Calu3 (cell line): ENCODE measurements at regions of chr6 and their contacts with region 1.

Region 1: GRCh38 chr6:127855542-127856159 is 45.2 kb downstream of the THEMIS start:
- DNase-seq: peak; percentile 22
- H3K4me3 Mint-ChIP-seq: no peak overlapping the region
- H3K27ac Mint-ChIP-seq: no peak overlapping the region
- H3K4me1 Mint-ChIP-seq: no peaks in the 10 kb centered on the region
- H3K27me3 Mint-ChIP-seq: no peaks in the 10 kb centered on the region
- CTCF ChIP-seq: peak; percentile 42

Region 2: GRCh38 chr6:127796713-127797112 is 58.9 kb before region 1 on chr6:
- CTCF ChIA-PET with region 1: no interaction called
- intact Hi-C with region 1: no loop called
- DNase-seq: no peak
- H3K4me3 Mint-ChIP-seq: no peak overlapping the region
- H3K27ac Mint-ChIP-seq: no peak overlapping the region
- H3K4me1 Mint-ChIP-seq: no peaks in the 10 kb centered on the region
- H3K27me3 Mint-ChIP-seq: peaks cover 50% of the 10 kb centered on the region
- CTCF ChIP-seq: no peak

Region 3: GRCh38 chr6:127963495-127963894 is 107.8 kb after region 1 on chr6:
- CTCF ChIA-PET with region 1: no interaction called
- intact Hi-C with region 1: loop called (anchors 5 kb)
- DNase-seq: no peak
- H3K4me3 Mint-ChIP-seq: no peak overlapping the region
- H3K27ac Mint-ChIP-seq: no peak overlapping the region
- H3K4me1 Mint-ChIP-seq: no peaks in the 10 kb centered on the region
- H3K27me3 Mint-ChIP-seq: no peaks in the 10 kb centered on the region
- CTCF ChIP-seq: no peak

Region 4: DNA sequence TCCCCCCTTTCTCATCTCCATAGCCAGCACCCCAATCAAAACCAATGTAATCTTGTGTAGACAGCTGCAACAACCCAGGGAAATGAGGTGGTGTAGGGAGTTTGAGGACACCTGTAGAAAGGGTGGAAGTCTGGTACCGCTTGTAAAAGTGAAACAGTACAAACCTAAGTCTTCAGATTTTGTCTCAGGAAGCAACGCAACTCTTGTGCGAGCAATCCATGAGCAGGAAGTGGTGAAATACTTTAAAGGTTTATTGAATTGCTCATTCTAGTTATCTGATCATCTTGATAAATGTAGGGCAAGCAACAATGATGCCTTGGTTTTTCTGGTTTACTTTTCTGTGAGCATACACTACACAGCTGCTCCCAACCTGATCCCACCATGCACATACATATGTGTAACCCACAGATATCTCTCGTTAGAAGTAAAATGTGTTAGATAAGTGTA is 116.3 kb after region 1 on chr6:
- CTCF ChIA-PET with region 1: interaction called, 11 read pairs
- intact Hi-C with region 1: no loop called
- DNase-seq: peak; percentile 47
- H3K4me3 Mint-ChIP-seq: peak overlapping the region; percentile 65
- H3K27ac Mint-ChIP-seq: peak overlapping the region; percentile 94
- H3K4me1 Mint-ChIP-seq: peaks cover 33% of the 10 kb centered on the region
- H3K27me3 Mint-ChIP-seq: no peaks in the 10 kb centered on the region
- CTCF ChIP-seq: no peak

Region 5: DNA sequence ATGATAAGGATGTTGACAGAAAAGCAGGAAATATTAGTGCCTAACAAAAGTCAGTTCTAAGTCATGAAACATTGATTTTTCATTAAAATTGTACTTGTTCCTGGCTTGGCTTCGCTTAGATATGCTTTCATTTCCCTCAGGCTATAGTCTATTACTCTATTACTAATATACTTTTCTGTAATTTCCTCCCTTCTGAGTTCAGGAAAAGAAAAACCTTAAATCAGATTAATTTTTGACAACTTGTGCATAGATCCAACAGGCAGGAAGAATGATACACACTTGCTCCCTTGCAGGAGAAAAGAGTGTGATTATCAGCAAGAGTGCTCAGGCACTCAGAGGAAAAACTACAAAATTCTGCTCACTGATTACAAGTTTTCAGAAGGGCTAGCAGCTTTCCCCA is 190.4 kb after region 1 on chr6:
- CTCF ChIA-PET with region 1: no interaction called
- intact Hi-C with region 1: loop called (anchors 10 kb)
- DNase-seq: no peak
- H3K4me3 Mint-ChIP-seq: no peak overlapping the region
- H3K27ac Mint-ChIP-seq: peak overlapping the region; percentile 27
- H3K4me1 Mint-ChIP-seq: peaks cover 23% of the 10 kb centered on the region
- H3K27me3 Mint-ChIP-seq: no peaks in the 10 kb centered on the region
- CTCF ChIP-seq: no peak

Region 6: DNA sequence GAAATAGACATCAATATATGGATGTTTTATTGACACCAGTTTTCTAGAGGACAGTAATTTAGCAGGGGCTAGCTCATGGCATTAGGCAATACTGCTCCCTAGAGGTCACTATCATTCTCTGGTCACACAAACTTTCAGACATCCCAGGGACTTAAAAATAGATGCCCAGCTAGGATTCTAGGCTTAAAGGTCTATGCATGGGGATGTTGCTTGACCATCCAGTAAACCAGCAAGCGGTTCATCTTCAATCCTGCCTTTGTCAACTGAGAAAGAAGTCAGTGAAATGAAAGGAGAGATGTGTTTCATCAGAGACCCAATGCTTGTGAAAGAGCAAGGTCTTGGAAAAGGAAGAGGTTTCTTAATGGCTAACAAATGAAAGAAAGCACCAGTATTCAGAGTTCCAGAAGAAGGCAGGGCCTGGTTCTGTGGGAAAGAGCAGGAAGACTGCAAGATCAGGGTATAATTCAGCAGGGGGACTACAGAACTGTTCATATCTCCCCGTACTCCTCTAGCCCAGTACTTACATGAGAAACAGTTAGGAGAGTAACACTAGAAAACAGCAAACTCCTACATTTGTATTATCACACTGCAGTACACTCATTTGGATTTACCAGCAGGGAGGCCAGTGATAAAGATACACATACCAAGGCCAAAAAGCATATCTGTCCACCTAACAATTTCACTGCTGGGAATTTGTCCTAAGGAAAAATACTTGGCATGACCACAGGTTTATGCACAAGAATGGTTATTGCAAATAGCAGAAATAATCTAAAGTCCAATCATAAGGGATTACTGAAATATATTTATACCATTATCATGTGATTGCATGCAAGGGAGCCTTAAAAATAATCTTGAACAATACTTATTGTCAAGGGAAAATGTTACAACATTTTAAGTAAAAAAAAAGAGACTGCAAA is 875.9 kb after region 1 on chr6:
- CTCF ChIA-PET with region 1: interaction called, 4 read pairs
- intact Hi-C with region 1: loop called (anchors 5 kb)
- DNase-seq: peak; percentile 36
- H3K4me3 Mint-ChIP-seq: no peak overlapping the region
- H3K27ac Mint-ChIP-seq: no peak overlapping the region
- H3K4me1 Mint-ChIP-seq: no peaks in the 10 kb centered on the region
- H3K27me3 Mint-ChIP-seq: no peaks in the 10 kb centered on the region
- CTCF ChIP-seq: peak; percentile 46